PC-9 (cell line): ENCODE measurements at regions of chr19 and their contacts with region 1.

Region 1: DNA sequence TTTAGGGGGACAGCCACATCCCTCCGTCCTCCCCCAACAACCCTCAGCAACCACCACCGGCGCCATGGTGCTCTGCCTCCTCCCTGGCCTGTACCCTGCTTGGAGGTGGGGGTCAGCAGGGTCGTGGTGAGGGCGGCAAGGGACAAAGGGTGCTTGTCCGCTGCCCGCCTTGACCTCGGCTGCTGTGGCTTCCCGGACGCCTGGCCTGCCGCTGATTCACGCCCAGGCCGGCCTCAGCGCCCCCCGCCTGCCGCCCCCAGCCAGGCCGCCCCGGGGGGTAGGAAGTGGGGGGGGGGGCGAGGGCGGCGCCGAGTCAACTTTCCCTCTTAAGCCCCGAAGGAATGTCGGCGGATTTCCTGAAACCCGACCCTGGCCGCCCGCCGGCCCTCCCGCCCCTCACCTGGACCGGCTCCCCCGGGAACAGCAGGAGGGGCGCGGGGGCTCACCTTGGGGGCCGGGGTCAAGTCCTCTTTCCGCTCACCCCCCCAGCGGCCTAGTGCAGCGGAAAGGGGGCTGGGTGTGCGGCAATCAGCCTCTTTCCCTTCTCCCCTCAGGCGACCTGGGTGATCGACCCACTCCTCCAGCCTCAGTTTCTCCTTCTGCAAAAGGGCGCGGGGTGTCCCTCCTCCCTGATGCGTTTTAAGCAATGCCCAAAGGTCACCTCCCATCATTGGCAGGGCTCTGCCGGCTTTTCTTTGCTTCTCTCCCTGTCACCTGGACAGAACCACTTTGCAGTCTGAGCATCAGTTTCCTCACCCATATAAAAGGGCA is 1.9 kb upstream of the TMEM59L start:
- DNase-seq: no peak
- H3K4me3 ChIP-seq: peak overlapping the region; percentile 34; the same call in 1 of the 2 replicates
- H3K27ac ChIP-seq: no peak overlapping the region
- H3K4me1 ChIP-seq: peaks cover 26% of the 10 kb centered on the region
- H3K27me3 ChIP-seq: peaks cover 90% of the 10 kb centered on the region
- CTCF ChIP-seq: no peak

Region 2: DNA sequence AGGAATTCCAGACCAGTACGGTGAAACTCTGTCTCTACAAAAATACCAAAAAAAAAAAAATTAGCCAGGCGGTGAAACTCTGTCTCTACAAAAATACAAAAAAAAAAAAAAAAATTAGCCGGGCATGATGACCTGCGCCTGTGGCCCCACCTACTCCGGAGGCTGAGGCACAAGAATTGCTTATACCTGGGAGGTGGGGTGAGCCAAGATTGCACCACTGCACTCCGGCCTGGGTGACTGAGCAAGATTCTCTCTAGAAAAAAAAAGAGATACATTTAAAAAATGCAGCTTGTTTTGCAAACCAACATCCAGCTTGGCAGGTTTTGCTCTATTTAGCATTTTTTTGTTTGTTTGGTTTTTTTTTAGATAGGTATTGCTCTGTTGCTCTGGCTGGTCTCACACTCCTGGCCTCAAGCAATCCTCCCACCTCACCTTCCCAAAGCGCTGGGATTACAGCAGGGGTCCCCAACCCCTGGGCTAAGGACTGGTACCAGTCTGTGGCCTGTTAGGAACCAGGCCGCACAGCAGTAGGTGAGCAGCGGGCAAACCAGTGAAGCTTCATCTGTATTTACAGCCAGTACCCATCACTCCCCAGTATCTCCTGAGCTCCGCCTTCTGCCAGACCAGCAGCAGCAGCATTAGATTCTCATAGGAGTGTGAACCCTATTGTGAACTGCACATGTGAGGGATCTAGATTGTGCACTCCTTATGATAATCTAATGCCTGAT is 276.9 kb before region 1 on chr19:
- CTCF ChIA-PET with region 1: no interaction called
- POLR2A ChIA-PET with region 1: interaction called, 16 read pairs
- intact Hi-C with region 1: no loop called
- DNase-seq: peak; percentile 78 to 94
- H3K4me3 ChIP-seq: peak overlapping the region; percentile 19; the same call in 1 of the 2 replicates
- H3K27ac ChIP-seq: peak overlapping the region; percentile 89
- H3K4me1 ChIP-seq: peaks cover 40% of the 10 kb centered on the region
- H3K27me3 ChIP-seq: no peaks in the 10 kb centered on the region
- CTCF ChIP-seq: no peak

Region 3: DNA sequence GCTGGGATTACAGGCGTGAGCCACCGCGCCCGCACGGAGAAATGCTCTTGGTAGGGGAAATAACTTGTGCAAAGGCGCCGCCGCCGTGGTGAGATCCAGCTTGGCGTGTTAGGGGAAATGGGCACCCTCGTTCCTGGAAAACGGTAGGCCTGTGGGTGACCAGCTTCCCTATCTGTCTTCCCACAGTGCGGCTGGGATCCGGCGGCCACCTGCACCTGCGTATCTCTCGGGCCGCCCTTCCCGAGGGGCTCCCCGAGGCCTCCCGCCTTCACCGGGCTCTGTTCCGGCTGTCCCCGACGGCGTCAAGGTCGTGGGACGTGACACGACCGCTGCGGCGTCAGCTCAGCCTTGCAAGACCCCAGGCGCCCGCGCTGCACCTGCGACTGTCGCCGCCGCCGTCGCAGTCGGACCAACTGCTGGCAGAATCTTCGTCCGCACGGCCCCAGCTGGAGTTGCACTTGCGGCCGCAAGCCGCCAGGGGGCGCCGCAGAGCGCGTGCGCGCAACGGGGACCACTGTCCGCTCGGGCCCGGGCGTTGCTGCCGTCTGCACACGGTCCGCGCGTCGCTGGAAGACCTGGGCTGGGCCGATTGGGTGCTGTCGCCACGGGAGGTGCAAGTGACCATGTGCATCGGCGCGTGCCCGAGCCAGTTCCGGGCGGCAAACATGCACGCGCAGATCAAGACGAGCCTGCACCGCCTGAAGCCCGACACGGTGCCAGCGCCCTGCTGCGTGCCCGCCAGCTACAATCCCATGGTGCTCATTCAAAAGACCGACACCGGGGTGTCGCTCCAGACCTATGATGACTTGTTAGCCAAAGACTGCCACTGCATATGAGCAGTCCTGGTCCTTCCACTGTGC is 222.4 kb before region 1 on chr19:
- CTCF ChIA-PET with region 1: no interaction called
- POLR2A ChIA-PET with region 1: no interaction called
- intact Hi-C with region 1: no loop called
- DNase-seq: peak; percentile 69 to 74
- H3K4me3 ChIP-seq: peak overlapping the region; percentile 91
- H3K27ac ChIP-seq: peak overlapping the region; percentile 73; the same call in 1 of the 2 replicates
- H3K4me1 ChIP-seq: peaks cover 15% of the 10 kb centered on the region
- H3K27me3 ChIP-seq: no peaks in the 10 kb centered on the region
- CTCF ChIP-seq: peak; percentile 99

Region 4: GRCh38 chr19:18636183-18636968 is 25.6 kb after region 1 on chr19:
- CTCF ChIA-PET with region 1: no interaction called
- POLR2A ChIA-PET with region 1: no interaction called
- intact Hi-C with region 1: no loop called
- DNase-seq: peak; percentile 91 to 98
- H3K4me3 ChIP-seq: peak overlapping the region; percentile 94
- H3K27ac ChIP-seq: no peak overlapping the region
- H3K4me1 ChIP-seq: peaks cover 18% of the 10 kb centered on the region
- H3K27me3 ChIP-seq: no peaks in the 10 kb centered on the region
- CTCF ChIP-seq: no peak